Endothelial cell of umbilical vein (primary cell): ENCODE measurements at regions of chrX and their contacts with region 1.

Region 1: GRCh38 chrX:110317820-110318658 is at the start of gene AMMECR1:
- DNase-seq: peak; percentile 71
- H3K4me3 ChIP-seq: peak within 1 kb of the TSS; percentile 89
- H3K27ac ChIP-seq: peak within 1 kb of the TSS; percentile 53
- H3K4me1 ChIP-seq: peaks cover 9% of the 10 kb centered on the region
- H3K27me3 ChIP-seq: no peaks in the 10 kb centered on the region
- CTCF ChIP-seq: no peak
- POLR2A ChIP-seq: no peak
- total RNA-seq, gene AMMECR1: 6.8 and 6.9 TPM in 2 replicates

Region 2: GRCh38 chrX:109732780-109733657 is 585.0 kb before region 1 on chrX and contains the start of gene ACSL4:
- CTCF ChIA-PET with region 1: no interaction called
- POLR2A ChIA-PET with region 1: no interaction called
- dilution Hi-C with region 1: no loop called
- intact Hi-C with region 1: loop called (anchors 2 kb)
- DNase-seq: peak; percentile 82
- H3K4me3 ChIP-seq: peak within 1 kb of the TSS; percentile 58 to 86 (median 70)
- H3K27ac ChIP-seq: peak within 1 kb of the TSS; percentile 89
- H3K4me1 ChIP-seq: peaks cover 26% of the 10 kb centered on the region
- H3K27me3 ChIP-seq: no peaks in the 10 kb centered on the region
- CTCF ChIP-seq: no peak
- POLR2A ChIP-seq: peak; percentile 83
- total RNA-seq, gene ACSL4: 85.5 and 88.9 TPM in 2 replicates

Region 3: GRCh38 chrX:110167952-110168451 is 150.0 kb before region 1 on chrX:
- CTCF ChIA-PET with region 1: interaction called, 10 read pairs
- POLR2A ChIA-PET with region 1: no interaction called
- dilution Hi-C with region 1: no loop called
- intact Hi-C with region 1: no loop called
- DNase-seq: no peak
- H3K4me3 ChIP-seq: no peak overlapping the region
- H3K27ac ChIP-seq: no peak overlapping the region
- H3K4me1 ChIP-seq: peaks cover 9% of the 10 kb centered on the region
- H3K27me3 ChIP-seq: no peaks in the 10 kb centered on the region
- CTCF ChIP-seq: peak; percentile 43 to 48
- POLR2A ChIP-seq: no peak

Region 4: GRCh38 chrX:110188756-110189558 is 129.1 kb before region 1 on chrX:
- CTCF ChIA-PET with region 1: no interaction called
- POLR2A ChIA-PET with region 1: no interaction called
- dilution Hi-C with region 1: no loop called
- intact Hi-C with region 1: loop called (anchors 5 kb)
- DNase-seq: peak; percentile 47
- H3K4me3 ChIP-seq: no peak overlapping the region
- H3K27ac ChIP-seq: no peak overlapping the region
- H3K4me1 ChIP-seq: peaks cover 5% of the 10 kb centered on the region
- H3K27me3 ChIP-seq: no peaks in the 10 kb centered on the region
- CTCF ChIP-seq: no peak
- POLR2A ChIP-seq: no peak

Region 5: GRCh38 chrX:110210417-110211139 is 107.5 kb before region 1 on chrX:
- CTCF ChIA-PET with region 1: interaction called, 6 read pairs
- POLR2A ChIA-PET with region 1: no interaction called
- dilution Hi-C with region 1: no loop called
- intact Hi-C with region 1: loop called (anchors 5 kb)
- DNase-seq: peak; percentile 72
- H3K4me3 ChIP-seq: no peak overlapping the region
- H3K27ac ChIP-seq: peak overlapping the region; percentile 41
- H3K4me1 ChIP-seq: peaks cover 11% of the 10 kb centered on the region
- H3K27me3 ChIP-seq: no peaks in the 10 kb centered on the region
- CTCF ChIP-seq: no peak
- POLR2A ChIP-seq: no peak

Region 6: GRCh38 chrX:110407910-110408545 is 90.0 kb after region 1 on chrX:
- CTCF ChIA-PET with region 1: interaction called, 3 read pairs
- POLR2A ChIA-PET with region 1: no interaction called
- dilution Hi-C with region 1: no loop called
- intact Hi-C with region 1: loop called (anchors 2 kb)
- DNase-seq: peak; percentile 29
- H3K4me3 ChIP-seq: no peak overlapping the region
- H3K27ac ChIP-seq: no peak overlapping the region
- H3K4me1 ChIP-seq: peaks cover 7% of the 10 kb centered on the region
- H3K27me3 ChIP-seq: no peaks in the 10 kb centered on the region
- CTCF ChIP-seq: peak; percentile 46 to 57
- POLR2A ChIP-seq: no peak

Region 7: GRCh38 chrX:111254896-111255693 is 937.1 kb after region 1 on chrX:
- CTCF ChIA-PET with region 1: no interaction called
- POLR2A ChIA-PET with region 1: no interaction called
- dilution Hi-C with region 1: no loop called
- intact Hi-C with region 1: no loop called
- DNase-seq: no peak
- H3K4me3 ChIP-seq: no peak overlapping the region
- H3K27ac ChIP-seq: no peak overlapping the region
- H3K4me1 ChIP-seq: no peaks in the 10 kb centered on the region
- H3K27me3 ChIP-seq: no peaks in the 10 kb centered on the region
- CTCF ChIP-seq: no peak
- POLR2A ChIP-seq: no peak

Region 8: GRCh38 chrX:111284631-111285293 is 966.7 kb after region 1 on chrX:
- CTCF ChIA-PET with region 1: no interaction called
- POLR2A ChIA-PET with region 1: no interaction called
- dilution Hi-C with region 1: no loop called
- intact Hi-C with region 1: no loop called
- DNase-seq: no peak
- H3K4me3 ChIP-seq: no peak overlapping the region
- H3K27ac ChIP-seq: no peak overlapping the region
- H3K4me1 ChIP-seq: no peaks in the 10 kb centered on the region
- H3K27me3 ChIP-seq: no peaks in the 10 kb centered on the region
- CTCF ChIP-seq: no peak
- POLR2A ChIP-seq: no peak